ENCODE measurements at regions of chr19 and their contacts with region 1.

Region 1: GRCh38 chr19:860481-861101 is 1.1 kb downstream of the CFD start:
- DNase-seq: peak; percentile 84
- ATAC-seq: peak; percentile 53

Region 2: GRCh38 chr19:771332-771785 is 89.2 kb before region 1 on chr19:
- intact Hi-C with region 1: loop called (anchors 2 kb)
- DNase-seq: no peak
- ATAC-seq: no peak

Region 3: DNA sequence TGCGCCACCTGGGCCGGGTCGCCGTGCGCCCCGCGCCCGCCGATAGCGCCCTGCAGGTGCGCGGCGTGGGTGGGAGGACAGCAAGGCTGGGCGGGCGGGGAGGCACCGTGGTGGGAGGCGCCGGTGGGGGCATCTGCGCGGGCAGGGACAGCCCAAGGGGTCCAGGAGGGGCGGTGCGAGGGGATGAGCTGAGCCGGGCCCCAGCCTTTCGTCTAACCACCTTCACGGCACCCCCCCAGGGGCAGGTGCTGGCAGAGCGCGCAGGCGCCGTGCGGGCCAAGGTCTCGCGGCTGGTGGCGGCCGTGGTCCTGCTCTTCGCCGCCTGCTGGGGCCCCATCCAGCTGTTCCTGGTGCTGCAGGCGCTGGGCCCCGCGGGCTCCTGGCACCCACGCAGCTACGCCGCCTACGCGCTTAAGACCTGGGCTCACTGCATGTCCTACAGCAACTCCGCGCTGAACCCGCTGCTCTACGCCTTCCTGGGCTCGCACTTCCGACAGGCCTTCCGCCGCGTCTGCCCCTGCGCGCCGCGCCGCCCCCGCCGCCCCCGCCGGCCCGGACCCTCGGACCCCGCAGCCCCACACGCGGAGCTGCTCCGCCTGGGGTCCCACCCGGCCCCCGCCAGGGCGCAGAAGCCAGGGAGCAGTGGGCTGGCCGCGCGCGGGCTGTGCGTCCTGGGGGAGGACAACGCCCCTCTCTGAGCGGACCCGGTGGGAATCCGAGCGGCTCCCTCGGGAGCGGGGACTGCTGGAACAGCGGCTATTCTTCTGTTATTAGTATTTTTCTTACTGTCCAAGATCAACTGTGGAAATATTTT is 59.7 kb after region 1 on chr19:
- intact Hi-C with region 1: loop called (anchors 2 kb)
- DNase-seq: no peak
- ATAC-seq: no peak

Region 4: GRCh38 chr19:984165-984967 is 123.8 kb after region 1 on chr19 and contains the start of gene WDR18:
- intact Hi-C with region 1: loop called (anchors 1 kb)
- DNase-seq: peak; percentile 97
- ATAC-seq: peak; percentile 95
- total RNA-seq, gene WDR18: 20.7 TPM

Measured in Right ventricle myocardium inferior (tissue), 1 donor.